WTC11 (cell line): ENCODE measurements at regions of chr11 and their contacts with region 1.

Region 1: DNA sequence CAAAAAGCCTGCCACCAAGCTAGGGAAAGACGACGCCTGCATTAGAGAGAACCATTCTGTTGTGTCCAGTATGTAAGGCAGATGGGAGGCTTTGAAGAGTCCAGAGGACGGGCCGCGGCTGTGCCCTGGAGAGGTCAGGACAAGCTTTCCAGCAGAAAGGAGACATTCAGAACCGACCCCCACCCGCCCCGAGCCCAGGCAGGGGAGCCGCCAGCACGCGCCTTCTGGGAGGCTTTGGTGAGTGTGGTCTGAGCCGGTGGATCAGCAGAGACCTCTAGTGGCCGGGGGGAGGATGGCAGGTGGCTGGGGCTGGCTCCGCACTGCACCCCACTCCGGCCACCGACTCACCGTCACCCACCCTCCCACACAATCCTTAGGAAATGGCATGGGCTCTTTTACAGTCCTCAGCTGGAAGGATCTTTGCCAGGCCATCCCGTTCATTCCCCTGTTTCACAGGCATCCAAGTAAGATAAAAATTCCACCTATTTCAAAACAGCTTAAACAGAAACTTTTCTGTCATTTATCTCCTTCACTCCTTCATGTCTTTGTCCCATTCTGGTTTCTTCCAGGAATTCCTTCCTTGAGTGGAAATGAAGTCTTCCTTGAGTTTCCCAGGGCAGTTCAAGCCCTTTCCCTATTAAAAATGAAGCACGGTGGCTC is 91.2 kb downstream of the FEZ1 start:
- DNase-seq: peak; percentile 90
- ATAC-seq: peak; percentile 84
- H3K4me3 Mint-ChIP-seq: no peak overlapping the region
- H3K27ac Mint-ChIP-seq: 0 out of 2 replicates have a peak overlapping the region, but pooled peaks have one; percentile 29
- H3K4me1 Mint-ChIP-seq: peaks cover 61% of the 10 kb centered on the region
- H3K27me3 Mint-ChIP-seq: peaks cover 23% of the 10 kb centered on the region
- CTCF ChIP-seq: peak; percentile 98

Region 2: DNA sequence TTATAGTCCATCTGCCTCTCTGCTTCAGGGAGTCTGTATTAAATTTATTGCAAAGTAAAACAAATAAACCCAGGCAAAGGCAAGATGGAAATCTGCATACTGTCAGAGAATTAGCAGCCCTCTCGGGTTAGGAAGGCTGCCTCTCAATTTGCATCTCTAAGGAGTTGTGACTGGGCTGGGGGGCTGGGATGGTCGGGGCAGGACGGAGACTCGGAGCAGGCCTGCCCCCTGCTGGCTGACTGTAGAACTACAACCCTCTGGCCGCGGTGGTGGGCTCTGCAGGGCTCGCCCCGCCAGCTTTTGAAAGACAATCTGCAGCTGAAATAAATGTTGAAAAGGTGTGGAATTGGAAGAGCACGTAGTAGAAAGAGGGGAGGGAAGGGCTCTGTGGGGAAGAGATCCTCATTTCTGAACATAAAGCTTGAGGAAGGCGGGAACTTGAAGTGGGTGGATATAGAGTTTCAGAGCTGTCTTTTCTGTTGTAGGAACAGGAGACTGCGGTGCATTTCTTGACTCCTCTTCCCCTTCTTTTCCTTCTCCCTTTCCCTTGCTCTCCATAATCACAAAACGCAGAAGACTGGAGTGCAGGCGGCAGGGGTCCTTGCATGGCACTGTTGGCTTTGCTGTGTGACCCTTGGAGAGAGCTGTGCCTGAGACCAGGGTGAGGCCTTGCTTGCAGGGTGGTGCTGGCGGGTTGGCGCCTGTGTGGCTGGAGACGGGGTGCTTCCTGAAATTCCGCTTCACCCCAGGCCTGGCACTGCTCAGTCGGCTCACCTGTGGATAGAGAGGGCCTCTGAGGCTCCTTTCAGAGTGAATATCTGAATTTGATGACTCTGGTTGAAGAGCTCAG is 263.0 kb before region 1 on chr11:
- CTCF ChIA-PET with region 1: interaction called, 17 read pairs
- POLR2A ChIA-PET with region 1: no interaction called
- DNase-seq: peak; percentile 90
- ATAC-seq: peak; percentile 88
- H3K4me3 Mint-ChIP-seq: peak overlapping the region; percentile 53
- H3K27ac Mint-ChIP-seq: no peak overlapping the region
- H3K4me1 Mint-ChIP-seq: peaks cover 62% of the 10 kb centered on the region
- H3K27me3 Mint-ChIP-seq: peaks cover 89% of the 10 kb centered on the region
- CTCF ChIP-seq: peak; percentile 99

Region 3: DNA sequence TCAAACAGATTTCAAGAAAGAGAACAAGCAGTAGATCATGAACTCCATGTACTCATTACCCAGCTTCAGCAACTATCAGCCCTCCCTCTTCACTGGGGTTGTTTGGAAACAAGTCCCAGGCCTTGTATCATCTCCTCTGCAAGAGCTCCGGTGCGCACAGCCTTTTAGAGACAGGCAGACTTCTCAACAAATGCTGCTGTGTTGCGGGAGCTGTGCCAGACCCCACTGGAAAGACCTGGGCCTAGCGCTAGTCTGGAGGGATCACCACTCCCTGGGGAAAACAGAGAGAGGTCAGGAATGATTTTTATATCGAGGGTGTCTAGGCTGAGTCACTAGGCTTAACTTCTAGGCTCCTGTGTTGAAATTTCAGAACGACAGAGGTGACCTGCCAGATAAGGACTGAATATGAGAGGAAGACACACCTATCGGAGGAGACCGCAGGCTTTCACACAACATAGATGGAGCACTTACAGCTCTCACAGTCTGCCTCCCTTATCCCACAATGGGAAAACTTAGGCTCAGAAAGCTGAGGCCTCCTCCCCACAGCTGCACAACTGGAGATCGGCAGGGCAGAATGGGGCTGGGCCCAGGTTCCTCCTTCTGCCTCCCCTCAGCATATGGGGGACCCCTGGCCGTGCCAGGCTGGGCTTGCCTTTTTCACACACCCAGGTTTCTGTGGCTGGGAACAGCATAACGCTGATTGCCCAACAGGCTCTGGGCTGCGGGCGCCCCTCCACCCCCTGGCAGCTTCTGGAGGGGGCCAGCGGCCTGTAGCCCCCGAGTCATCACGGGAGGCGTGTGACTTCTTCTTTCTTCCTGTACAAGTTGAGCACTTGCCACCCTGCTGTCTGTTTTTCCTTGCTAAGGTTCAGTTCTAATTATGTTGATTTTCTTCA is 154.3 kb before region 1 on chr11:
- CTCF ChIA-PET with region 1: no interaction called
- POLR2A ChIA-PET with region 1: no interaction called
- DNase-seq: no peak
- ATAC-seq: peak; percentile 31; the same call in 1 of the 2 replicates
- H3K4me3 Mint-ChIP-seq: no peak overlapping the region
- H3K27ac Mint-ChIP-seq: no peak overlapping the region
- H3K4me1 Mint-ChIP-seq: peaks cover 20% of the 10 kb centered on the region
- H3K27me3 Mint-ChIP-seq: no peaks in the 10 kb centered on the region; the same call in 1 of the 2 replicates
- CTCF ChIP-seq: no peak

Region 4: DNA sequence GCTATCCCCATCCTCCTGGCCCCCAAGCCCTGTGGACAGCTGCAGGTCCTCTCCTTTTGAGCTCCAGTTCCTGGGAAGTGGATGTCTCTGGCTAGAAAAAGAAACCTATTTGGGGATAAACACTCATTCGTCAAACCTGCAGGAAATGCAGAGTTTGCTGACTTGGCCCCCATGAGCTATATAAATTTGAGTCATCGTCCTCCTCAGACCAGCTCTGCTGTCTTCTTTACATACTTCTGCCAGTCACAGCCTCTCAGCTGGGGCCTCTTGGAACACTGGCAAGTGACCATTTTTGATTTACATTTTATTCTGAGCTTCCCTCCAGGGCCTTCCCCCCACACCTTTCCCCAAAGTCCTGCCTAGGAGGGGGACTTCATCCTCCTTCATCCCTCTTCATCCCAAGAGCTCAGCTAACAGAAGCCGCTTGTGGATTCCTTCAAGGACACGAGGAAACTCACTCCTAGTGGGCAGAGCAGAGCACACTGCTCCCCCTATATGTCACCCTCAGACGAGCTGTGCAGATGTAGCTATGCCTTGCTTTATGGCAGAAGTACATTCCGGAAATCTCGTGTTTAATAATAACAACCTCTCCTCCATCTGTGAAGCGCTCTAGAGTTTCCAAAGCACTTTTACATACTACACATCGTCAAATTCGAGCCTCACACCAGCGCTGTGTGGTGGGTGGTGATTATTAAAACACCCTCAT is 40.6 kb before region 1 on chr11:
- CTCF ChIA-PET with region 1: interaction called, 49 read pairs
- POLR2A ChIA-PET with region 1: no interaction called
- DNase-seq: no peak
- ATAC-seq: peak; percentile 61
- H3K4me3 Mint-ChIP-seq: no peak overlapping the region
- H3K27ac Mint-ChIP-seq: no peak overlapping the region
- H3K4me1 Mint-ChIP-seq: peaks cover 14% of the 10 kb centered on the region
- H3K27me3 Mint-ChIP-seq: no peaks in the 10 kb centered on the region; the same call in 1 of the 2 replicates
- CTCF ChIP-seq: 0 out of 2 replicates have a peak, but pooled peaks have one; percentile 13

Region 5: DNA sequence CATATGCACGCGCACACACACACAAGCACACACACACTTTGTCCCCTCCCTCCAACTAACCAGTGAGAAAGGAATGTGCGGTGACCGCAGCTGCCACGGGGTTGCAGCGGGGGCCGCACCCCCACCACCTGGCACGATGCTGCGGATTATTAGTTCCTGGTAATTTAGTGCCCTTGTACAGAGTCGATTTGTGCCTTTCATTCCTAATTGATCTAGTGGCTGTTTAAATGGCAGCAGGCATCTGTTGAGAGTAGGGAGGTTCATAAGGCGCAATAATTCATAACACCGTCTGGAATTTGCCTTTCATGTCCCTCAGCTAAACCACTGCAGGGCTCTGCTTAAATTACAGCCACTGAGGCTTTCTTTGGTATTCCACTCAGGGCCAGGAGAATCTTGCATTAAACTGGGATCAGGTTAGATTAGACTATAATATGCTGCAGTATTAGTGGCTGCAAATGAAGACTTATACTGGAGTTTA is 22.6 kb before region 1 on chr11:
- CTCF ChIA-PET with region 1: interaction called, 13 read pairs
- POLR2A ChIA-PET with region 1: no interaction called
- DNase-seq: no peak
- ATAC-seq: no peak
- H3K4me3 Mint-ChIP-seq: no peak overlapping the region
- H3K27ac Mint-ChIP-seq: no peak overlapping the region
- H3K4me1 Mint-ChIP-seq: peaks cover 20% of the 10 kb centered on the region
- H3K27me3 Mint-ChIP-seq: no peaks in the 10 kb centered on the region
- CTCF ChIP-seq: no peak

Region 6: DNA sequence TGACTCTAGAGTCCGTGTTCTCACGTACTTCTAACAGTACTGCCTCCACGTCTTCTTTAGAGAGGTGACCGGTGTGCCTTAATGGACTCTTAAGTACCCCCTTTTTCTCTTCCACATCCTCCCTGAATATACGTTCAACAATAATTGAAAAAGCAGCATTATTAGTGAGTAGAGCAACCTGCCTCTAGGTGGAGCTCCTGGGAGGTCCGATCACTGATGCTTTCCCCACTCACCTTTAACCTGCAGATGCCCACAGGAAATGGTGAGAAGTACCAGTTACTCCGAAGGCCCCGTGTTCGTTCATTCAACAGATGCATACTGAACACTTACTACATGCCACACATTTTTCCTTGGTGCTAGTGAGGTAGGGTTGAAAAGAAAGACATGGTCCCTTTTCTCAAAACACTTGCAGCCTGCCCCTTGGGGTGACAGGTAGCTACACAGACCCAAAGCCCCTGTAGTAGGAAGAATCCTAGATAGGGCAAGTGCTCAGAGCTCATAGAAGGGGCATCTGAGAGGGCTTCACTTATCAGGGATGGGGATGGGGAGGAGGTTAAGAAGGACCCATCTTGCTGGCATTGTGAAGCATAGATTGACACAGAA is 18.4 kb after region 1 on chr11:
- CTCF ChIA-PET with region 1: interaction called, 45 read pairs
- POLR2A ChIA-PET with region 1: interaction called, 3 read pairs
- DNase-seq: no peak
- ATAC-seq: peak; percentile 79
- H3K4me3 Mint-ChIP-seq: no peak overlapping the region
- H3K27ac Mint-ChIP-seq: no peak overlapping the region
- H3K4me1 Mint-ChIP-seq: peaks cover 21% of the 10 kb centered on the region
- H3K27me3 Mint-ChIP-seq: no peaks in the 10 kb centered on the region
- CTCF ChIP-seq: 0 out of 2 replicates have a peak, but pooled peaks have one; percentile 17

Region 7: DNA sequence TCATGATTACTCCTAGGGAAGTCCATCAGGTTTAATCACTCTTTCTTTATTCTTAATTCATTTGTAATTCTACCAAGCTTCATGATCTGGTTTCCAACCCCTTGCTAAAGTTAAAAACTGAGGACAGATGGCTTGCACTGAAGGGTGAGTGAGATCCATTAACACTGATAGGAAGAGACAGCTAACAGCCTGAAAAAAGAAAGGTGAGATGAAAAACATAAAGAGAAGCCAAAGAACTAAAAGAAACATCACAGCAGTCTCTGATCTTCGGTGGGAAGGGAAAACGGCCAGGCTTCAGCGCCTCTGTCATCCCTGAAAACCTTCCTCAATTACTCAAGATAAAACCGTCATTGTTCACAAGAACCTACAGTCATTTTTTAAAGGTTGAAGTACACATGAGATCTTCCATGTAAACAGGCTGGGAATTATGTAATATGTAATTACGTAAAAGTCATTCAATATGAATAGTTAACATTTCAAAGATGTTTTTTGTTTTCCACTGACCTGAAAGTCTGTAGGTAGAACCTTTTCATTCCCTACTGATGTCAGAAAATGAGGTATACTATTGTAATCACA is 582.2 kb after region 1 on chr11:
- CTCF ChIA-PET with region 1: no interaction called
- POLR2A ChIA-PET with region 1: no interaction called
- DNase-seq: no peak
- ATAC-seq: no peak
- H3K4me3 Mint-ChIP-seq: no peak overlapping the region
- H3K27ac Mint-ChIP-seq: no peak overlapping the region
- H3K4me1 Mint-ChIP-seq: no peaks in the 10 kb centered on the region
- H3K27me3 Mint-ChIP-seq: no peaks in the 10 kb centered on the region
- CTCF ChIP-seq: no peak